ENCODE measurements at regions of chr15 and their contacts with region 1.

Region 1: DNA sequence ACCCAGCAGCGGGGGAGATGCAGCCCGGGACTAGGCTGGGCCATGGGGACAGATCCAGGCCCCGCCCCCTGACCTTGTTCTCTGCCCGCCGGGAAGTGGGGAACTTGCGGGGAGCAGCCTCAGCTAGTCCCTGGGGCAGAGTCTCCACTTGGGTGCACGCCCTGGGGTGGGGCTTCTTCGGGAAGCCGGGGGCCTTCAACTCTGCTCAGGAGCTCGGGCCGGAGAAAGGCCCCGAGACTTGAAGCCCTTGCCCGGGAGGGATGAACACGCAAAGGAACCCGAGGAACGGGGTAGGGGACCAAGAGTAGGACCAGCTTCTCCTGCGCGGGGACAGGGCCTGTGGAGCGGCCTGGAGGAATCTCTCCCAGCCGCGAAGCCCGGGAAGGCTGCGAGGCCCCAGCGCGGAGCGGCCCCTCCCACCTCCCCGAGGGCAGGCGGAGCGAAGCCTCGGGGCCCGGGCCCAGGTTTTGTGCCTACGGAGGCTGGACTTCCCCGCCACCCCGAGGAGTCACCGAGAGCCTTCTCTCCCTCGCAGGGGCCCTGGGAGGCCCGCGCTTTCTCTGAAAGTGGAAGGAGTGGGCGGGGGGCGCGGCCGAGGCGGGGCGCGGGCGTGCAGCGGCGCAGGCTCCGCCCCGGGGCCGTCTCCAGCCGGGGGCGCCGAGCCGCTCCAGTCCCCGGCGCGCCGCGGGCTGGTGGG is at the start of gene ITPKA:
- DNase-seq: peak; percentile 95
- H3K4me3 Mint-ChIP-seq: peak within 1 kb of the TSS; percentile 59
- H3K27ac Mint-ChIP-seq: peak within 1 kb of the TSS; percentile 3
- H3K4me1 Mint-ChIP-seq: peaks cover 32% of the 10 kb centered on the region
- H3K27me3 Mint-ChIP-seq: peaks cover 38% of the 10 kb centered on the region
- total RNA-seq, gene ITPKA: 1.0 to 1.7 TPM

Region 2: GRCh38 chr15:41283653-41284426 is 209.5 kb before region 1 on chr15:
- CTCF ChIA-PET with region 1: no interaction called
- intact Hi-C with region 1: loop called (anchors 1 kb)
- DNase-seq: peak; percentile 99
- H3K4me3 Mint-ChIP-seq: peak overlapping the region; percentile 99
- H3K27ac Mint-ChIP-seq: peak overlapping the region; percentile 97
- H3K4me1 Mint-ChIP-seq: peaks cover 45% of the 10 kb centered on the region
- H3K27me3 Mint-ChIP-seq: no peaks in the 10 kb centered on the region

Region 3: GRCh38 chr15:41354371-41354770 is 139.0 kb before region 1 on chr15:
- CTCF ChIA-PET with region 1: no interaction called
- intact Hi-C with region 1: no loop called
- DNase-seq: no peak
- H3K4me3 Mint-ChIP-seq: no peak overlapping the region
- H3K27ac Mint-ChIP-seq: no peak overlapping the region
- H3K4me1 Mint-ChIP-seq: no peaks in the 10 kb centered on the region
- H3K27me3 Mint-ChIP-seq: no peaks in the 10 kb centered on the region

Region 4: DNA sequence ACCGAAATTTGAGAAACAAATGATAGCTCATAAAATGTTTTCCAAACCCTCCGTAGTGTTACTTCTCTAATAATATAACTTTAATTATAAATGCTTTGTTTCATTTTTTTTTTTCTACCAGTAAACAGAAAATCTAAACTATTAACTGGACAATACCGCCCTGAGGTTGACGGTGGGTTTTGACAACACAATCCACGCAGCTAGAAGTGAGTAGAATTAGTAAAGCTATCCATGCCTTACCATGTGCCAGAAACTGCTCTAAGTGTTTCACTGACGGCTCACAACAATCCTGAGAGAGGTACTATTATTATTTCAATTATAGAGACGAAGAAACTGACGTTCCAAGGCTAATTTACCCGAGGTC is 91.5 kb before region 1 on chr15:
- CTCF ChIA-PET with region 1: no interaction called
- intact Hi-C with region 1: loop called (anchors 5 kb)
- DNase-seq: no peak
- H3K4me3 Mint-ChIP-seq: peak overlapping the region; percentile 89
- H3K27ac Mint-ChIP-seq: peak overlapping the region; percentile 87
- H3K4me1 Mint-ChIP-seq: peaks cover 17% of the 10 kb centered on the region
- H3K27me3 Mint-ChIP-seq: no peaks in the 10 kb centered on the region

Region 5: DNA sequence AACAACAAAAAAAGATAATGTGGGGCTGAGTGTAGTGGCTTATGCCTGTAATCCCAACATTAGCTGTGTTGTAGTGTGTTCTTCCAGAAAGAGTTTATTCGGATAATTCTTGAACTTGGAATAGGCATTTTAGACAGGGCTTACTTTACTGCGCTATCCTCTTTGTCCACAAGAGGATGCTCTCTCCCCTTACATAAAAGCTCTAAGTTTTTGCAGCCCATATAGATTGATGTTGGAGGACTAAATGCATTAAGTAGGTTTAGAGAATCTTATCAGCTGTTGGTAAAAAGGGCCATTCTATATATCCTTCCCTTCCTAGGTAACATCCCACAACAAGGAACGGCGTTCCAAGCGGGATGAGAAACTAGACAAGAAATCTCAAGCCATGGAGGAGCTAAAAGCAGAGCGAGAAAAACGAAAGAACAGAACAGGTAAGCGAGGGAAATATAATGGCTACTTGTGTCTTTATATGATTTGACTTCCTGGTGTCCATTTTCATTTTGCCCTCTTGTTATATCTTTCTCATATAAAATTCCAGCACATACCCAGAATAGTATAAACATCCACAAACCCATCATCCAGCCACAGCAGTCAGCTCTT is 27.4 kb before region 1 on chr15:
- CTCF ChIA-PET with region 1: interaction called, 4 read pairs
- intact Hi-C with region 1: loop called (anchors 1 kb)
- DNase-seq: peak; percentile 57
- H3K4me3 Mint-ChIP-seq: no peak overlapping the region
- H3K27ac Mint-ChIP-seq: no peak overlapping the region
- H3K4me1 Mint-ChIP-seq: no peaks in the 10 kb centered on the region
- H3K27me3 Mint-ChIP-seq: no peaks in the 10 kb centered on the region

Region 6: DNA sequence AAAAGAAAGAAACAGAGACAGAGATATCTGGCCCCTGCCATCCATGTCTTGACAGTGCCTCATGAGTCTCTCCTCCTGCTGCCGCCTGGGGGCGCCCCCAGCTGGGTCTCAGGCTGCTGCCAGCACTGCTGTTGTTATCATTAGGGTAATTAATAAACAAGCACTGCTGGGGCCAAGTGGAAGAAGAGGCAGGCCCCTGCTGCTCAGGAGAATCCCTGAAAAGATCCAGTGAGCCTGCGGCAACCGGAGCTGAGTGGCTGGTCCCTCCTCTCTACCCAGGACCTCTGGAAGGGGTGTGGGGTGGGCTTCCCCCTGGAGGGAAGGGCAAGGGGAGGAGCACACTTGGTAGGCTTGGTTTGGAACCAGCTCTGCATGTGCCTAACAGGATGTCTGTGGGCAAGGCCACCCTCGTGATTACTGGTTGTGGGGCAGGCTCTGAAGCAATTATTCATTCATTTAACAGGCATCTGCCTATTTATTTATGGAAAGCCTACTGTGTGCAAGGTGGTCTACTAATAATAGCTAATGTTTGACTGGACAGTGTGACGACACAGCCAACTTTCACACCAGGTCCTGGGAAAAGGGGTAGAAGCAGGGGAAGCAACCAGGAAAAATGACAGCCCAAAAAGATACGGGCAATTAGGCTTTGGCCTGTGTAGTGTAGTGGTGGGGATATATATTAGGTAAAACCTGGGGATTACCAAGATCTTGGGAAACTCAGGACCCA is 64.5 kb after region 1 on chr15:
- CTCF ChIA-PET with region 1: no interaction called
- intact Hi-C with region 1: loop called (anchors 5 kb)
- DNase-seq: peak; percentile 79
- H3K4me3 Mint-ChIP-seq: peak overlapping the region; percentile 87
- H3K27ac Mint-ChIP-seq: no peak overlapping the region
- H3K4me1 Mint-ChIP-seq: peaks cover 13% of the 10 kb centered on the region
- H3K27me3 Mint-ChIP-seq: peaks cover 15% of the 10 kb centered on the region

Region 7: DNA sequence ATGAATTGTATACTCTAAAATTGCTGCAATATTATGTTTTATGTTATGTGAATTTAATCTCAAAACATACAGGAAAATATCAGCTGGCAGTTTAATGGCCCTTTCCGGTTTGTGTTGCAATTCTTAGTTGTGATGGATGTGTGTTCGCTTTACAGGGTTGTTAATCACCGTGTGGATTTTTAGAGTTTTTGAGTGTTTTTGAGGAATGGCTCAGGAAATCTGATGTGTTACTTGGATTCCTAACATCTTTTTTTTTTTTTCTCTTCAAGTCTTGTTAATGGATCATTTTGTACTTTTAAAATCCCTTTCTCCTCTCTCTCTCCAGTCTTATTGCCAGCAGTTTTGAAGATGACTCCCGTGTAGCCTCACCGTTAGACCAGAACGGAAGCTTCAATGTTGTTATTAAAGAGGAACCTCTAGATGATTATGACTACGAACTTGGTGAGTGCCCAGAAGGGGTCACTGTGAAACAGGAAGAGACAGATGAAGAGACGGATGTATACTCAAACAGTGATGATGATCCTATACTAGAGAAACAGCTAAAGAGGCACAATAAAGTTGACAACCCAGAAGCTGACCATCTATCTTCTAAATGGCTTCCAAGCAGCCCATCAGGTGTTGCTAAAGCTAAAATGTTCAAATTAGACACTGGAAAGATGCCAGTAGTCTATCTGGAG is 202.5 kb after region 1 on chr15:
- CTCF ChIA-PET with region 1: no interaction called
- intact Hi-C with region 1: loop called (anchors 2 kb)
- DNase-seq: peak; percentile 78
- H3K4me3 Mint-ChIP-seq: peak overlapping the region; percentile 22
- H3K27ac Mint-ChIP-seq: peak overlapping the region; percentile 76
- H3K4me1 Mint-ChIP-seq: peaks cover 48% of the 10 kb centered on the region
- H3K27me3 Mint-ChIP-seq: no peaks in the 10 kb centered on the region